Activated T-helper 2 cell treated with anti-CD3 and anti-CD28 coated beads, Interferon-gamma antibody, Interleukin-2, Interleukin-4, amounts not matched to agents 10 μg/mL and 5 μg/mL and 100 μg/mL, durations not matched to agents 14 hours and 24 hours and 36 hours (primary cell): ENCODE measurements at regions of chr10 and their contacts with region 1.

Region 1: GRCh38 chr10:69061305-69062161 is 26.4 kb upstream of the SRGN start:
- DNase-seq: peak; percentile 35
- H3K4me3 Mint-ChIP-seq: peak overlapping the region; percentile 66
- H3K27ac Mint-ChIP-seq: peak overlapping the region; percentile 86
- H3K4me1 Mint-ChIP-seq: peaks cover 64% of the 10 kb centered on the region
- H3K27me3 Mint-ChIP-seq: no peaks in the 10 kb centered on the region

Region 2: GRCh38 chr10:69025370-69025896 is 36.1 kb before region 1 on chr10:
- intact Hi-C with region 1: loop called (anchors 1 kb)
- DNase-seq: no peak
- H3K4me3 Mint-ChIP-seq: no peak overlapping the region
- H3K27ac Mint-ChIP-seq: no peak overlapping the region
- H3K4me1 Mint-ChIP-seq: peaks cover 17% of the 10 kb centered on the region
- H3K27me3 Mint-ChIP-seq: no peaks in the 10 kb centered on the region

Region 3: DNA sequence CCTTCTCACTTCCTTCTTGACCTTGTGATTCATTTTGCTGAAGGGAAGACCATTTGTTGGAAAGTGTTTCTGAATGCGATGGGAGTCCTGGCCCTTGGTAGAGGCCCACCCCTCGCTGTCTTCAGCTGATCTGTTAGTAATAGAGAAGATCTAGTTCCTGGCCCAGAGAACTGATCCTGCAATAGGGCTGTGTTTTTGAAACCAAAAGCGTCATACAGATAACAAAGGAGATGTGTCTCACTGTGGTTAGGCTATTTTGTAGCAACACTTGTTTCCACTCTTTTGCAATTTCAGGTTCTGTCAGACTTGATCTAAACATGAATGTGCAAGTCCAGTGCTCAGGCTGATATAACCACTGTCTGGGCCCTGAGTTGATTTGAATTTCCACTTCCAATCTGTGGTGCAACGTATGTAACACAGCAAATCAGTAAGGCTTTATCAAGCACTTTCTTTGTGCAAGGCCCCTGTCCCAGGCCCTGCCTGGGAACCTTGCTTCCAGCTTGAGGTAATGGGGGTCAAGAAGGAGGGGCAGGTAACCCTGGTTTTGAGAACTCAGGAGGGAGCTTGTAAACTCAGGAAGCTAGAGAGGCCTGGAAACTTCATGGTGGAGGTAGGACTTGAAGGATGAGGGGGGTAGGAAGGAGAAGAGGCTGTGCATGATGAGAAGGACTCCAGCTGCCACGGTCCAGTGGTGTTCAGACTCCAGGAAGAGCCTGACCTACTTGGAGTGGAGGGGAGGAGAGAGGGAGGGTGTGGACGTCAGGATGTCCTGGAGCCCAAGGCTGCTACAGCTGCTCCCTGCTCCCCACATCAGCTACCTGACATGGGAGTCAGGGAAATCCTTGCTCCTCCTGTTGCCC is 15.9 kb before region 1 on chr10:
- intact Hi-C with region 1: loop called (anchors 1 kb)
- DNase-seq: peak; percentile 49
- H3K4me3 Mint-ChIP-seq: peak overlapping the region; percentile 70
- H3K27ac Mint-ChIP-seq: peak overlapping the region; percentile 100
- H3K4me1 Mint-ChIP-seq: peaks cover 49% of the 10 kb centered on the region
- H3K27me3 Mint-ChIP-seq: no peaks in the 10 kb centered on the region

Region 4: DNA sequence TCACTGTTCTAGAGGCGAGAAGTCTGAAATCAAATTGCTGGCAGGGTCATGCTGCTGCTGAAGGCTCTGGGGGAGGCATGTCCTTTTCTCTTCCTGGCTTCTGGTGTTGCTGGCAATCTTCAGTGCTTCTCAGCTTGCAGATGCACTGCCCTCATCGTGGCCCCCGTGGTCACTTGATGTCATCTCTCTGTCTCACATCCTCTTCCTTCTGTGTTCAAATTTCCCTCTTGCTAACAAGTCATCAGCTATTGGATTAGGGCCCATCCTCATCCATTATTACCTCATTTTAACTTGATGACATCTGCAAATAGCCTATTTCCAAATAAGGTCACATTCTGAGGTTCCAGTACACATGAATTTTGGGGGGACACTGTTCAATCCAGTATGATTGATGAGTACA is 10.2 kb before region 1 on chr10:
- intact Hi-C with region 1: loop called (anchors 1 kb)
- DNase-seq: peak; percentile 34
- H3K4me3 Mint-ChIP-seq: no peak overlapping the region
- H3K27ac Mint-ChIP-seq: peak overlapping the region; percentile 79
- H3K4me1 Mint-ChIP-seq: peaks cover 64% of the 10 kb centered on the region
- H3K27me3 Mint-ChIP-seq: no peaks in the 10 kb centered on the region